MCF 10A (cell line): ENCODE measurements at regions of chr1 and their contacts with region 1.

Region 1: GRCh38 chr1:212035123-212035834 is at the starts of genes DTL and INTS7:
- DNase-seq: peak; percentile 100
- H3K4me3 Mint-ChIP-seq: peak within 1 kb of the TSS; percentile 88
- H3K27ac Mint-ChIP-seq: peak within 1 kb of the TSS; percentile 89
- H3K4me1 Mint-ChIP-seq: peaks cover 65% of the 10 kb centered on the region
- H3K27me3 Mint-ChIP-seq: no peaks in the 10 kb centered on the region
- CTCF ChIP-seq: peak; percentile 99
- total RNA-seq, gene DTL: 20.2 and 34.4 TPM in 2 replicates
- total RNA-seq, gene INTS7: 50.0 and 62.3 TPM in 2 replicates

Region 2: GRCh38 chr1:211613093-211613947 is 422.0 kb before region 1 on chr1:
- CTCF ChIA-PET with region 1: no interaction called
- POLR2A ChIA-PET with region 1: no interaction called
- intact Hi-C with region 1: no loop called
- DNase-seq: peak; percentile 100
- H3K4me3 Mint-ChIP-seq: peak overlapping the region; percentile 33
- H3K27ac Mint-ChIP-seq: peak overlapping the region; percentile 61
- H3K4me1 Mint-ChIP-seq: peaks cover 37% of the 10 kb centered on the region
- H3K27me3 Mint-ChIP-seq: no peaks in the 10 kb centered on the region
- CTCF ChIP-seq: no peak

Region 3: GRCh38 chr1:211675230-211676105 is 359.8 kb before region 1 on chr1 and contains the start of gene NEK2:
- CTCF ChIA-PET with region 1: interaction called, 242 read pairs
- POLR2A ChIA-PET with region 1: interaction called, 43 read pairs
- intact Hi-C with region 1: loop called (anchors 1 kb)
- DNase-seq: peak; percentile 100
- H3K4me3 Mint-ChIP-seq: peak within 1 kb of the TSS; percentile 92
- H3K27ac Mint-ChIP-seq: peak within 1 kb of the TSS; percentile 91
- H3K4me1 Mint-ChIP-seq: peaks cover 26% of the 10 kb centered on the region
- H3K27me3 Mint-ChIP-seq: no peaks in the 10 kb centered on the region
- CTCF ChIP-seq: no peak
- total RNA-seq, gene NEK2: 33.4 and 44.5 TPM in 2 replicates

Region 4: DNA sequence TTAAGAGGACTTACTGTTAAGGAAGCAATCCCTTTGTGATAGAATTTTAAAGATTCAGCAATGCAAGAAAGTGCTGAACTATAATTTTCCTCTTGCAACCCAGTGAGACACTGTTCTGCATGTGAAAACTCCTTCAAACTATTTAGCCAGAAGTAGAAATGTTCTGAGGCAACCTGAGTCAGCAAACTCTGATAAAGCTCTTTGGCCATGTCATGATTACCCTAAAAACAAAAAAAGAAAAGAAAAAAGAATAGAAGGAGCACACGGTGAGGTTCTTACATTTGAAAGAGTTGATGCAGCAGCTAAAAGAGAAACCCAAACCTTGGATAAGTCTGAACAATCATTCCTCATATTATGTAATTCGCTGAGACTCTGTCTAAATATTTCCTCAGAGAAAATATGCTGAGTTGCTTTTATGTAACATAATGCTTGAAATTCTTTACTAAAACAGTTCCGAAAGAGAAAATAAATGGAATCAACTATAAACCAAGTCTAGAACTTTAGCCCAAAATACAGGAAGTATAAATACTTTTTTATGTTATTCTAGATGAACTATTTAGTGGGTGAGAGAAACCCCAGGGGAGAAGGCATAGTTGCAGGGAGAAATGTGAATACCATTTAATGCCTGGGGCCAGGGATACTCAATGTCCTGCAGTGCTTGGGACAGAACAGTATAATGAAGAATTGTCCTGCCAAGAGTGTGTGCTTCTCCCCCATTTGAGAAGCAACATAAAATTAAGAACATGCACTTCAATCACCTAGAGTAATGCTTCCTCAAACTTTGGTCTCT is 59.9 kb before region 1 on chr1:
- CTCF ChIA-PET with region 1: interaction called, 15 read pairs
- POLR2A ChIA-PET with region 1: interaction called, 4 read pairs
- intact Hi-C with region 1: no loop called
- DNase-seq: no peak
- H3K4me3 Mint-ChIP-seq: no peak overlapping the region
- H3K27ac Mint-ChIP-seq: peak overlapping the region; percentile 43
- H3K4me1 Mint-ChIP-seq: no peaks in the 10 kb centered on the region
- H3K27me3 Mint-ChIP-seq: no peaks in the 10 kb centered on the region
- CTCF ChIP-seq: no peak

Region 5: GRCh38 chr1:212021563-212021962 is 13.7 kb before region 1 on chr1:
- CTCF ChIA-PET with region 1: interaction called, 332 read pairs
- POLR2A ChIA-PET with region 1: interaction called, 385 read pairs
- intact Hi-C with region 1: no loop called
- DNase-seq: no peak
- H3K4me3 Mint-ChIP-seq: no peak overlapping the region
- H3K27ac Mint-ChIP-seq: no peak overlapping the region
- H3K4me1 Mint-ChIP-seq: peaks cover 10% of the 10 kb centered on the region
- H3K27me3 Mint-ChIP-seq: no peaks in the 10 kb centered on the region
- CTCF ChIP-seq: no peak

Region 6: GRCh38 chr1:212118167-212118871 is 83.0 kb after region 1 on chr1:
- CTCF ChIA-PET with region 1: no interaction called
- POLR2A ChIA-PET with region 1: no interaction called
- intact Hi-C with region 1: no loop called
- DNase-seq: peak; percentile 91
- H3K4me3 Mint-ChIP-seq: no peak overlapping the region
- H3K27ac Mint-ChIP-seq: no peak overlapping the region
- H3K4me1 Mint-ChIP-seq: peaks cover 15% of the 10 kb centered on the region
- H3K27me3 Mint-ChIP-seq: no peaks in the 10 kb centered on the region
- CTCF ChIP-seq: no peak

Region 7: DNA sequence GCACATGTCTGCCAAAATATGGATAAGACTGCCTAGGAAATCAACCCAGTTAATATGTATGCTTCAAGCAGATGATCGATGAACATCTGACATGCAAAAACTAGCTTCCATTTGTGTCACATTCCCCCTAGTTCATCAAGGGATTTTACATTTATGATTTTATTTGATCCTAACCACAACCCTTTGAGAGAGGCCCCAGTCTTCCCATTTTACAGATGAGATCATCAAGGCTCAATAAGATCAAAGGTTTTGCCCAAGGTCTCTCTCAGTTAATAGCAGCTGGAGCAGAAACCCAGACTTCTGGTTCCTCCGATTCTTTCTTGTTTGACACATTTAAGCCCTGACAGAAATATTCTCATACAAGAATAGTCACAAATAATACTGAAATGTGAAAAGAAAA is 142.3 kb after region 1 on chr1:
- CTCF ChIA-PET with region 1: no interaction called
- POLR2A ChIA-PET with region 1: no interaction called
- intact Hi-C with region 1: no loop called
- DNase-seq: no peak
- H3K4me3 Mint-ChIP-seq: no peak overlapping the region
- H3K27ac Mint-ChIP-seq: no peak overlapping the region
- H3K4me1 Mint-ChIP-seq: peaks cover 9% of the 10 kb centered on the region
- H3K27me3 Mint-ChIP-seq: no peaks in the 10 kb centered on the region
- CTCF ChIP-seq: no peak

Region 8: GRCh38 chr1:212284744-212285684 is 249.7 kb after region 1 on chr1 and contains the start of gene PPP2R5A:
- CTCF ChIA-PET with region 1: interaction called, 42 read pairs
- POLR2A ChIA-PET with region 1: interaction called, 127 read pairs
- intact Hi-C with region 1: no loop called
- DNase-seq: peak; percentile 100
- H3K4me3 Mint-ChIP-seq: peak within 1 kb of the TSS; percentile 94
- H3K27ac Mint-ChIP-seq: peak within 1 kb of the TSS; percentile 99
- H3K4me1 Mint-ChIP-seq: peaks cover 29% of the 10 kb centered on the region
- H3K27me3 Mint-ChIP-seq: no peaks in the 10 kb centered on the region
- CTCF ChIP-seq: peak; percentile 20
- total RNA-seq, gene PPP2R5A: 37.5 and 38.6 TPM in 2 replicates

Region 9: DNA sequence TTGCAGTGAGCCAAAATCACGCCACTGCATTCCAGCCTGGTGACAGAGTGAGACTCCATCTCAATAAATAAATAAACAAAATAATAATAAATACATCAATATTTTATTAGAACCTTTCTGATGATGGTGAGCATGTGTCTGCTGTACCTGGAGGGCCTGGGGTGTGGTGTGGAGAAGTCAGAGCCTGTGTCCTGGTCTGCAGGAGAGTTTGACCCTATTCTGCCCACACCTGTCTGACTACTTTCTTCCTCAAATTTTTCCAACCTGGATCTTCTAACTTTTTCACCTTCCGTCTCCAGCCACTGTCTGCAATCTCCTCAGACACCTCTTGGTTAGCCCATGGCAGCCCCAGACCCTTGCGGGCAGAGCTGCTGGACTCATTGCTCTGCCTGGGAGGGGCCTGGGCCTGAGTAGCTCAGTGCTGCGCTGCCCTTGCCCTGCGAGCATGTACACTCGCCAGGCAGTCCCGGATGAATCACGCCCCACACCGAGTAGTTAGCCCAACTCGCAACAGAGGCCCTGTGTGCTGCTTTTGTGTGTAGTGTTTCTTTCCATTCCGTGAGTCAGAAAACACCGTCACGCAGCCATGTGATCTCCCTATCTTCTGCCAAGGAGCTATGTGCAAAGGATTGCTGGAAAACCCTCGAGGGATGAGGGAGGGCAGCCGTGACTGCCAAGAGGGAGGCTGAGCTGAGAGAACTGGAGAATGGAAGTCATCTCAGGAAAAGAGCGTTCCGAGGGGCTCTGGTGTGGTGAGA is 434.6 kb after region 1 on chr1:
- CTCF ChIA-PET with region 1: interaction called, 3 read pairs
- POLR2A ChIA-PET with region 1: interaction called, 11 read pairs
- intact Hi-C with region 1: no loop called
- DNase-seq: peak; percentile 96
- H3K4me3 Mint-ChIP-seq: peak overlapping the region; percentile 49
- H3K27ac Mint-ChIP-seq: peak overlapping the region; percentile 90
- H3K4me1 Mint-ChIP-seq: peaks cover 10% of the 10 kb centered on the region
- H3K27me3 Mint-ChIP-seq: no peaks in the 10 kb centered on the region
- CTCF ChIP-seq: no peak

Region 10: DNA sequence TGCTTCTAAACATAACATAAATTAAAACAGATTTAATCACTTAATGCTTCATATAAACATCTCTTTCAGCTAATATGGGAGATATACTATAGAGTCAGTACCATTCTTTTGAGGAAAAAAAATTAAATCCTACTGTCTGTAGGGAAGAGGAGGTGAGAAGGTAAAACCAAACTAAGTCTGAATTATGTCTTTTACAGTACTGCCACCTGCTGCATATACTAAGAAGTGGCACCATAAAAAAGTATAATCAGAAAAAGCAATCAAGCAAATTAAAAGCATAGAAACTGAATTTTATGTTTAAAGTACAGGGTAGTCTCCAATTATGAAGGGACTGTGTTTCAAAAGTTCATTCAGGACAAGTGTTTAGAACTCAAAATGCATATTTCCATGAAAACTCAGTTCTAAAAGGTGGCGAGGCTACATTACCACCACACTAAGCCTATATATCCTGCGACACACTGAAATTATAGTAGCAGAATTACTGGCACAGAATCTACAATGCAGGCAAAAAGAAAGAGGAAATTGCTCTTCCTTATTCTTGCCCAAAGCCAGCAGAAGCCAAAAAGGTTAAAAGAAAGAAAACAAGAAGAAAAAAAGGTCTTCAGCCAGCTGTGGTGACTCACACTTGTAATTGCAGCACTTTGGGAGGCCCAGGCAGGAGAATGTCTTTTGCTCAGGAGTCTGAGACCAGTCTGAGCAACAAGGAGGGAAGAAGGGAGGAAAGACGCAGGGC is 747.3 kb after region 1 on chr1:
- CTCF ChIA-PET with region 1: no interaction called
- POLR2A ChIA-PET with region 1: no interaction called
- intact Hi-C with region 1: no loop called
- DNase-seq: peak; percentile 58
- H3K4me3 Mint-ChIP-seq: no peak overlapping the region
- H3K27ac Mint-ChIP-seq: peak overlapping the region; percentile 57
- H3K4me1 Mint-ChIP-seq: peaks cover 7% of the 10 kb centered on the region
- H3K27me3 Mint-ChIP-seq: no peaks in the 10 kb centered on the region
- CTCF ChIP-seq: peak; percentile 84